B cell (primary cell): ENCODE measurements at regions of chr14 and their contacts with region 1.

Region 1: DNA sequence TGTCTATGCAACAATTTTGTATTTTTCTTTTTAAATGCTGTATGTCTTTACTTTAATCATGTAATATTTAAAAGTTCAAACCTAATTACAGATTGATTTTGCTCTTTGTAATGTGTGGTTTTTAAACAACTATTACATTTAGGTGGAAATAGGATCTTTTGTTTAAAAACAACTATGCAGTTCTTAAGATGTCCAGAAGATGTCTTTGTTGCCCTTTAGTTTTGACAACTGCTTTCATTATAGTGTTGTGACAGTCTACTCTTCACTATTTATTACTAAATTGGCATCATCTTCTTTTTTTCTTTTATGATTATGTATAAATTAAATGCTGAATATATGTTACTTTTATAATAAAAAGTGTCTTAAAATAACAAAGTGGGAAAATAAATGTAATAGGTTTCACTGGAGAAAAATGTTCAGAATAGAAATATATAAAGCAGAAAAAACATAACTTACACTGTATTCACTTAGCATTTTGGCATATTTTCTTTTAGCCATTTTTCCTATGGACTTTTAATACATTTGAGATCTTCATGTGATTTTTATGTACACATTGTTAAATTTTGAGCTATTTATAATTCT is 27.1 kb upstream of the PCNX4 start:
- DNase-seq: peak; percentile 56
- ATAC-seq: peak; percentile 57
- H3K4me3 ChIP-seq: no peak overlapping the region
- H3K4me3 Mint-ChIP-seq: no peak overlapping the region
- H3K27ac ChIP-seq: no peak overlapping the region
- H3K27ac Mint-ChIP-seq: no peak overlapping the region
- H3K4me1 ChIP-seq: no peaks in the 10 kb centered on the region
- H3K4me1 Mint-ChIP-seq: no peaks in the 10 kb centered on the region
- H3K27me3 ChIP-seq: no peaks in the 10 kb centered on the region
- H3K27me3 Mint-ChIP-seq: peaks cover 6% of the 10 kb centered on the region
- CTCF ChIP-seq: peak; percentile 75

Region 2: DNA sequence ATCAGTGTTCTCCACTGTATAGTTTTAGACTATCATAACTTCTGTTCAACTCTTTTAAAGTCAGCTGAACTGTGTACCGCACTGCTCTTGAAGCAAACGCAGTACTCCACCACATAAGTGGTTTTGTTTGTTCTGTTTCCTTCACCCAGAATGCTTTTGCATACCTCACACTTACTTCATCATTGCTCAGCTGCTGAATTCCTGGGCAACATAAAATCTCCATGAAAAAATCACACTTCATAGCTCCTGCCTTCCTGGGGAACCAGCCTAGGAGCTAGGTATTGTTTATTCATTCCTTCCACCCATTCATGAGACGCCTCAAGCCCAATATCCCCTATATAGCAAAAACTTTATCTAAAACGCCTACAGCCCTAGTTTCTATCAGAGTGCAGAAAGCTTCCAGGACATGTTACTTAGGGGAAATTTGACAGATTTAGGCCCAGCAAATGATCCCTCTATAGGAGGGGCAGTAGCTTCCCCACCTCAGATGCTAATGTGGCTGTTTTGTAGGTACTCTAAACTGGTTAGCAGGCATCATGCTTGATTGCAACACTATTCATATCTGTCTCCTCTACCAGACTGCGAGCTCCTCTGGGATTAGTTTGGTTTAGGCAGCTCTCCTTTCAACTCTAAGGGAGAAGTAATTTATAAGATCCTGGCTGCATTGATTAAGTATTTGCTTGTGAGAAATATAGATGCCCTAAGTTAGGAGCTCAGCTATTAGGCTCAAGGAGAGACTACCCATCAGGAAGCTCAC is 100.2 kb before region 1 on chr14:
- CTCF ChIA-PET with region 1: interaction called, 20 read pairs
- POLR2A ChIA-PET with region 1: no interaction called
- intact Hi-C with region 1: loop called (anchors 5 kb)
- DNase-seq: no peak
- ATAC-seq: peak; percentile 11
- H3K4me3 ChIP-seq: peak overlapping the region in 3 of 5 experiments; percentile 18 to 63 (median 55)
- H3K4me3 Mint-ChIP-seq: peak overlapping the region; percentile 86
- H3K27ac ChIP-seq: peak overlapping the region; percentile 86
- H3K27ac Mint-ChIP-seq: peak overlapping the region; percentile 88
- H3K4me1 ChIP-seq: peaks cover 10 to 15% of the 10 kb centered on the region in 2 donors
- H3K4me1 Mint-ChIP-seq: peaks cover 13% of the 10 kb centered on the region
- H3K27me3 ChIP-seq: no peaks in the 10 kb centered on the region
- H3K27me3 Mint-ChIP-seq: no peaks in the 10 kb centered on the region
- CTCF ChIP-seq: no peak

Region 3: GRCh38 chr14:60553808-60554207 is 489.2 kb after region 1 on chr14:
- CTCF ChIA-PET with region 1: no interaction called
- POLR2A ChIA-PET with region 1: no interaction called
- intact Hi-C with region 1: loop called (anchors 10 kb)
- DNase-seq: no peak
- ATAC-seq: no peak
- H3K4me3 ChIP-seq: no peak overlapping the region
- H3K4me3 Mint-ChIP-seq: no peak overlapping the region
- H3K27ac ChIP-seq: no peak overlapping the region
- H3K27ac Mint-ChIP-seq: no peak overlapping the region
- H3K4me1 ChIP-seq: no peaks in the 10 kb centered on the region
- H3K4me1 Mint-ChIP-seq: no peaks in the 10 kb centered on the region
- H3K27me3 ChIP-seq: peaks cover 0 to 9% (median 0%) of the 10 kb centered on the region in 4 experiments
- H3K27me3 Mint-ChIP-seq: peaks cover 31% of the 10 kb centered on the region
- CTCF ChIP-seq: no peak